BJ (cell line): ENCODE measurements at regions of chr6 and their contacts with region 1.

Region 1: DNA sequence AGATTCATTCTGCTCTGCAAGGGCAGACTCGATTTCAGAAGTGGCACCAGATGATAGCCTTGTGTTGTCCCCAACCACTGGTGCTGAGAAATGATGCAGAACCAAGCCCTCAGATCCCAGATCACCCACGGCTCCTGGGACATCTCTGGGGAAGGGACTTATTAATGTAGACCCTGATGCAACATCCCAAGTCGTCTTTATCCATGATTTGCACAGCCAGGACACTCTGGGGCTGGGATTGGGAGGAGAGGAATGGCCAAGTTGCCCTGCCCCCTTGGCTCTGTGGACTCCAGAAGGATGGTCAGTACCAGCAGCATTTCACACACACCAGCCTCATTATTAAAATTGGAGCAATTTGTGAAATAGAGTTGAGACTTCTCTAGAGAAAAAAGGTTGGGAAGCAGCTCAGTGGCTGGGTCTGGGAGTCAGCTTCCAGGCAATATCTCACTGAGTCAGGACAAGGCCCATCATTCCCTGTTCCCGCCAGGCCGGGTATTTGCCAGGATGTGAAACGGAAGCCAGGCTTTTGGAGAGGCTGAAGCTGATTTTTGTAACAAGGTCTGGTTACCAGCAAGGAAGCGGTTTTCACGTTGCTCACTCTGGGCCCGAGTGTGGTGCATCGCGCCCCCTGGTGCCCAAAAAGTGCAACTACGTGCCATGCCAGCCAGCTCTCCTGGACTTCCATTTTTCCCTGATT is 67.4 kb downstream of the ZBTB2 start:
- DNase-seq: no peak
- H3K4me3 ChIP-seq: no peak overlapping the region
- H3K27me3 ChIP-seq: no peaks in the 10 kb centered on the region
- CTCF ChIP-seq: peak; percentile 95

Region 2: GRCh38 chr6:150547502-150548222 is 776.3 kb before region 1 on chr6:
- CTCF ChIA-PET with region 1: no interaction called
- POLR2A ChIA-PET with region 1: no interaction called
- DNase-seq: no peak
- H3K4me3 ChIP-seq: no peak overlapping the region
- H3K27me3 ChIP-seq: peaks cover 2% of the 10 kb centered on the region; the same call in 1 of the 2 replicates
- CTCF ChIP-seq: no peak

Region 3: GRCh38 chr6:150891888-150892485 is 432.0 kb before region 1 on chr6:
- CTCF ChIA-PET with region 1: interaction called, 83 read pairs
- POLR2A ChIA-PET with region 1: no interaction called
- DNase-seq: peak; percentile 52
- H3K4me3 ChIP-seq: no peak overlapping the region
- H3K27me3 ChIP-seq: no peaks in the 10 kb centered on the region
- CTCF ChIP-seq: peak; percentile 77

Region 4: DNA sequence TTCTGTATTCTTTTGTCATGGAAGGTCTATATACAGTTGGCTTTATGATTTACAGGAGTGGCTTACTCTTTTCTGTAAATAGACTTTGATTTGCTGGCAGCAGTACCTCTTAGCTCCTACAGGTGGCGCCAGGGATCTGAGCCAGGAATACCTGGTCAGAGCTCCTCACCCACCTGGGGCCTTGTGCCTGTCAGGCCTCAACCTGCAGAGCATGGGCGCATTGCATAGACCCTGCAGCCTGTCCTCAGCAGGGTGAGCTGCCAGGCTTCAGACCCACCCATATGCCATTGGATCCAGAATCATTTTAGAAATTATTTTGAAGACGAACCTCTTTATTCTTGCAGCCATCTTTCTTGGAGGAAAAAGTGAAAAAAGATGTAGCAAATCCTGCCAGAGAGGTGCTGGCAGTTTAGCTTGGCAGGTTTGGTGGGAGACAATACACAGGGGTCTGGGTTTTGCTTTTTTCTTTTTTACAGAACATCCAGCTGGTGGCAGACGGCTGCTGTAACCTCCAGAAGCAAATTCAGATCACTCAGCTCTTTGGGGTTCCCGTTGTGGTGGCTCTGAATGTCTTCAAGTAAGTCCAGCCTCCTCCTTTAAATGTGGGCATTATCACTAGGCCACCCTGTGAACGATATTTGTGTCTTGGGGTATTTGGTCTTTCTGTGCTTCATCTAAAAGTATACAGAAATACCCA is 309.4 kb before region 1 on chr6:
- CTCF ChIA-PET with region 1: interaction called, 166 read pairs
- POLR2A ChIA-PET with region 1: no interaction called
- DNase-seq: no peak
- H3K4me3 ChIP-seq: no peak overlapping the region
- H3K27me3 ChIP-seq: no peaks in the 10 kb centered on the region
- CTCF ChIP-seq: peak; percentile 95

Region 5: GRCh38 chr6:151041686-151042085 is 282.3 kb before region 1 on chr6:
- CTCF ChIA-PET with region 1: interaction called, 10 read pairs
- POLR2A ChIA-PET with region 1: no interaction called
- DNase-seq: no peak
- H3K4me3 ChIP-seq: no peak overlapping the region
- H3K27me3 ChIP-seq: no peaks in the 10 kb centered on the region
- CTCF ChIP-seq: no peak

Region 6: GRCh38 chr6:151179321-151179720 is 144.6 kb before region 1 on chr6:
- CTCF ChIA-PET with region 1: no interaction called
- POLR2A ChIA-PET with region 1: no interaction called
- DNase-seq: peak; percentile 63
- H3K4me3 ChIP-seq: no peak overlapping the region
- H3K27me3 ChIP-seq: no peaks in the 10 kb centered on the region
- CTCF ChIP-seq: no peak

Region 7: GRCh38 chr6:151240036-151240685 is 83.8 kb before region 1 on chr6:
- CTCF ChIA-PET with region 1: interaction called, 18 read pairs
- POLR2A ChIA-PET with region 1: no interaction called
- DNase-seq: no peak
- H3K4me3 ChIP-seq: peak overlapping the region; percentile 88
- H3K27me3 ChIP-seq: no peaks in the 10 kb centered on the region; the same call in 1 of the 2 replicates
- CTCF ChIP-seq: no peak

Region 8: GRCh38 chr6:151307501-151307900 is 16.4 kb before region 1 on chr6:
- CTCF ChIA-PET with region 1: interaction called, 15 read pairs
- POLR2A ChIA-PET with region 1: interaction called, 8 read pairs
- DNase-seq: no peak
- H3K4me3 ChIP-seq: no peak overlapping the region
- H3K27me3 ChIP-seq: no peaks in the 10 kb centered on the region
- CTCF ChIP-seq: no peak